Dorsolateral prefrontal cortex (tissue), 120 donors: ENCODE measurements at regions of chr11 and their contacts with region 1.

Region 1: GRCh38 chr11:120952461-120953434 is 71.2 kb upstream of the TBCEL start:
- DNase-seq: peak; percentile 40 to 85 (median 78)
- H3K4me3 ChIP-seq: peak overlapping the region in 37 of 59 donors; percentile 1 to 53 (median 33)
- H3K27ac ChIP-seq: peak overlapping the region in 7 of 59 donors; percentile 11 to 63 (median 31)
- H3K27me3 ChIP-seq: no peaks in the 10 kb centered on the region
- CTCF ChIP-seq: peak in 55 of 56 donors; percentile 43 to 87 (median 75)

Region 2: DNA sequence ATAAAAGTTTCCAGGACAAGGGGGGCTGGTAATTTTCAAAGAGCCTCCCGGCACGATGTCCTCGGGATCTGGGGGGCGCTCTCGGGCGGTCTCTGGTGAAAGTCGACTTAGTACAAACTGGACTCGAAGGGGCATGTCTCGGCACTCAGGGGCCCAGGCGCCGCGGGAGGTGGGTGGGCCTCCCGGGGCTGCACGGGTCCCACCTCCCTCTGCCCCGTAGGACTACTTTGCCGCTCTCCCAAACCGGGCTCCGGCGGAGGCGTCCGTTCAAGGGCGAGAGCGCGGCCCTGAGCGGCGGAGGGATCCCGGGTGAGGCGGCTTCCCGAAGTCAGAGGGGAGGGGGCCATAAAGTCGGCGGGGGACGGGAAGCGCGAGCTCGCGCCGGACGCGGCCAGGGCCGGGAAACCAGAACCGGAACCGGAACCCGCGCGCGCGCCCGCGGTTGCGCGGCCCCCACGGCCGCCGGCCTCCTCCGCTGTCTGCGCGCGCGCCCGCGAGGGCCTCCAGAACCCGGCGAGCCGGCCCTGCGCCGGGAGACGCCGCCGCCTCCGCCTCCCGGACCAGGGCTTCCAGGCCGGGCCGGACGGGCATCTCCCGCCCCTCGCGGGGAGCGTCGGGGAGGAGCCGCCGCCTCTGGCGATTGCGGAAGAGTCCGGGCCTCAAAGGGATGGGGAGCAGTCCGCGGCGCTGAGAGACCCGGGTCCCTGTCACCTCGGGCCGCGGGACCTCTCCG is 616.7 kb before region 1 on chr11 and contains the start of gene ARHGEF12:
- intact Hi-C with region 1: loop called in 1 of 2 experiments (anchors 5 kb)
- DNase-seq: peak; percentile 81 to 95 (median 91)
- H3K4me3 ChIP-seq: peak within 1 kb of the TSS; percentile 72 to 96 (median 89)
- H3K27ac ChIP-seq: peak within 1 kb of the TSS; percentile 83 to 99 (median 97)
- H3K27me3 ChIP-seq: no peaks in the 10 kb centered on the region
- CTCF ChIP-seq: peak in 46 of 56 donors; percentile 15 to 70 (median 45)
- total RNA-seq, gene ARHGEF12: 103 to 277 (median 191) TPM

Region 3: DNA sequence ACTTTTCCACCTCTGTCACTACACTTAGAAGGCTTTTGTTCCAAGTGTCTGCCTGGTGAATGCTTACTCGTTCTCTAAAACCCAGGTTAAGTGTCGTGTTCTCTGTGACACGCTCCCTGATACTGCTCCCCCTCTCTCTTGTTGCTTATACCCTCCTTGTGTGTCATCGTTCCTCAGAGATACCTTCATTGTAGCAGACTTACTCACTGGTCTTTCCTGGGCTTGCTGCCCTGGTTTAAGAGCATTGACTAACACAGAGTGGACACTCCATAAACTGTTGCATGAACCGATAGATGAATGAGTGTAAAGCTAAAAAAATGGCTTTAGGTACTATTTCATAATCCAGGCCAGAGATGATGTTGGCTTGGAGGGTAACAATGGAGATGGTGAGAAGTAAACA is 269.9 kb before region 1 on chr11:
- intact Hi-C with region 1: loop called (anchors 5 to 10 kb)
- DNase-seq: no peak
- H3K4me3 ChIP-seq: no peak overlapping the region
- H3K27ac ChIP-seq: no peak overlapping the region
- H3K27me3 ChIP-seq: no peaks in the 10 kb centered on the region
- CTCF ChIP-seq: no peak

Region 4: GRCh38 chr11:120688163-120688562 is 264.6 kb before region 1 on chr11:
- intact Hi-C with region 1: loop called (anchors 5 to 10 kb)
- DNase-seq: no peak
- H3K4me3 ChIP-seq: no peak overlapping the region
- H3K27ac ChIP-seq: no peak overlapping the region
- H3K27me3 ChIP-seq: no peaks in the 10 kb centered on the region
- CTCF ChIP-seq: no peak

Region 5: DNA sequence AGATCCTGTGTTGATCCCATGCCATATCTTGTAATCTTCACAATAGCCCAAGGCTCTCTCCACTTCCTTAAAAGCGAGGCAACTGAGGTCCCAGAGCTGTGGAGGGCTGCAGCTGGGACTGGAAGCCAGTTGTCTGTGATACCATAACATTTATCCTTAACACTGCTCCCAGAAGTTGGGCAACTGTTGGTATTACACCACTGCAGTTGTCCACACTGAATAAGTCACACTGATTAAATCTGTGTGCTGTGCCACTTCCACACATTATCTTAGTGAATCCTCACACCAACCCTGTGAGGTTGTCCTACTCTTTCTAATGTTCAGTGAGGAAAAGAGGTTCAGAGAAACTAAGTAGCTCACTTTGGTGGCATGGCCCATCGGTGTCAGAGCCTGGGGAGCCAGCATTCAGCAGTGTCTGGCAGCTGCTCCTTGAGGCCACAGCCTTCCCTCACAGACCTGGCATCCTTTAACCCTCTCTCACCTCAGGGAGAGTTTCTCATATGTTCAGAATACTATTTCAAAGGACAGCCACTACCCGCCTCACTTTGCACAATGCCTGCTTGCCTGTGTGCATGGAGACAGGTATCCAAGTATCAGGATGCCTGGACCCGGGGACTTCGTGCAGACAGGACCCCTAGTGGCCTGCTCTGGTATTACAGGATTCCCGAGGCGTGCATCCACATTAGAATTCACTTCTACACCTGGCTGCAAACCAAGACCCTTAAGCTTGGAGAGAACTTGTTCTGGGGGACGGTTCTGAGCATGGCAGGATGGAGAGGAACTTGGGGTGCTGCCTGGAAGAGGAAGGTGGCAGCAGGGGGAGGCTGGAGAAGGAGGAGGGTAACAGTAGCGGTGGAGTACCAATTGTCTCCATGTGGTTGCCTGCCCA is 150.7 kb before region 1 on chr11:
- intact Hi-C with region 1: loop called in 1 of 2 experiments (anchors 10 kb)
- DNase-seq: peak; percentile 52 to 83 (median 72)
- H3K4me3 ChIP-seq: no peak overlapping the region
- H3K27ac ChIP-seq: no peak overlapping the region
- H3K27me3 ChIP-seq: no peaks in the 10 kb centered on the region
- CTCF ChIP-seq: peak; percentile 77 to 96 (median 89)

Region 6: GRCh38 chr11:120908461-120909191 is 44.1 kb before region 1 on chr11:
- intact Hi-C with region 1: no loop called
- DNase-seq: no peak
- H3K4me3 ChIP-seq: no peak overlapping the region
- H3K27ac ChIP-seq: no peak overlapping the region
- H3K27me3 ChIP-seq: no peaks in the 10 kb centered on the region
- CTCF ChIP-seq: no peak

Region 7: GRCh38 chr11:121321614-121322243 is 369.0 kb after region 1 on chr11:
- intact Hi-C with region 1: no loop called
- DNase-seq: peak; percentile 36 to 86 (median 70)
- H3K4me3 ChIP-seq: no peak overlapping the region
- H3K27ac ChIP-seq: no peak overlapping the region
- H3K27me3 ChIP-seq: no peaks in the 10 kb centered on the region
- CTCF ChIP-seq: peak; percentile 30 to 94 (median 76)